IMR-90 (cell line): ENCODE measurements at regions of chr5 and their contacts with region 1.

Region 1: GRCh38 chr5:175464074-175464941 is 14.1 kb upstream of the SFXN1 start:
- DNase-seq: peak; percentile 36
- ATAC-seq: peak; percentile 88
- H3K4me3 ChIP-seq: no peak overlapping the region
- H3K27ac ChIP-seq: no peak overlapping the region
- H3K4me1 ChIP-seq: peaks cover 2% of the 10 kb centered on the region; the same call in 1 of the 2 replicates
- H3K27me3 ChIP-seq: peaks cover 8% of the 10 kb centered on the region; the same call in 1 of the 2 replicates
- CTCF ChIP-seq: peak; percentile 55
- POLR2A ChIP-seq: no peak
- RAD21 ChIP-seq: peak; percentile 51

Region 2: GRCh38 chr5:174951146-174951780 is 513.0 kb before region 1 on chr5:
- CTCF ChIA-PET with region 1: no interaction called
- POLR2A ChIA-PET with region 1: no interaction called
- dilution Hi-C with region 1: no loop called
- in situ Hi-C with region 1: no loop called
- intact Hi-C with region 1: loop called (anchors 1 kb)
- DNase-seq: peak; percentile 80
- ATAC-seq: peak; percentile 99
- H3K4me3 ChIP-seq: no peak overlapping the region
- H3K27ac ChIP-seq: no peak overlapping the region
- H3K4me1 ChIP-seq: no peaks in the 10 kb centered on the region
- H3K27me3 ChIP-seq: no peaks in the 10 kb centered on the region; the same call in 1 of the 2 replicates
- CTCF ChIP-seq: peak; percentile 95
- POLR2A ChIP-seq: no peak
- RAD21 ChIP-seq: peak; percentile 97

Region 3: GRCh38 chr5:175475248-175475647 is 10.9 kb after region 1 on chr5:
- CTCF ChIA-PET with region 1: interaction called, 16 read pairs
- POLR2A ChIA-PET with region 1: no interaction called
- dilution Hi-C with region 1: no loop called
- in situ Hi-C with region 1: no loop called
- intact Hi-C with region 1: no loop called
- DNase-seq: no peak
- ATAC-seq: no peak
- H3K4me3 ChIP-seq: no peak overlapping the region
- H3K27ac ChIP-seq: no peak overlapping the region
- H3K4me1 ChIP-seq: peaks cover 4% of the 10 kb centered on the region
- H3K27me3 ChIP-seq: peaks cover 6% of the 10 kb centered on the region
- CTCF ChIP-seq: no peak
- POLR2A ChIP-seq: no peak
- RAD21 ChIP-seq: no peak